Activated naive CD4-positive, alpha-beta T cell treated with anti-CD3 and anti-CD28 coated beads for 36 hours (primary cell): ENCODE measurements at regions of chr5 and their contacts with region 1.

Region 1: DNA sequence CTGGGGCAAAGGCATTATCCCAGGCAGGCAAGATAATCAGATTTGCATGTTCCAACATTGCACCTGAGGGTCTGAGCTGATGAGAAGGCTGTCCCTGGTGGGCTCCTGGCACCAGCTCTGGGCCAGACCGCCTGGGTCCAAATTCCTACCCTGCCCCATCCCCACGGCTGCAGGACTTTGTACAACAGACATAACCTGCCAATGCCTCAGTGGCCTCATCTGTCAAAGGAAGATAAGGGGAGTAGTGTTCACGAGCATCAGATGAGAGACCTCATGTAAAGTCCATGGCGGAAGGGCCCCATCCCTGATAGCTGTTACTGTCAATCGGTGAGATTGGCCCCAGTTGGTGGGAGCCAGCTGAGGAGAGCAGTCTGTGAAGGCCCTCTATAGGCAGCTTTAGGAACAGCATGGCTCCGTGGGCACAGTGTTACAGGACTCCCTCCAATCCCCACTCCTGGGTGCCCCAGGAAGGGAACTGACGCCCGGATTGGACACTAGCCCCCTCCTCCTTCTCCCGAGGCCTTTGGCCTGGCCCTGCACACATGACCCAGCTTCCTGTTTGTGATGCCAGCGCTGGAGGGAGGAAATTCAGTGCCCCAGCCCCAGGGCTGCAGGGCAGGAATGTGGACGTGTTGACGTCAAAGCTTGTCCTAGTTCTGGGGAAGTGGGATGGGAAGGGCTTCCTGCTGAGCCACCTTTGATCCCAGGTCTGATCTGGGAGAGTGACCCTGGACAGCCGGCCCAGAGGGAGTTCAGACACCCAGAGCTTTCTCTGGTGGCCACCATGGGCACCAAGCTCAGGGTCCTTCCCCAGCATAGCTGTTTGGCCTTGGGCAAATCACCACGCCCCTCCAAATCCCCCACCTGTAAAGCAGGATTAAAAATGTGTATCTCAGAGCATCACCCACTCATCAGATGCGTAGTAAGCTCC is 56.2 kb downstream of the DUSP1 start:
- DNase-seq: peak; percentile 75
- H3K4me3 Mint-ChIP-seq: no peak overlapping the region
- H3K27ac Mint-ChIP-seq: no peak overlapping the region
- H3K4me1 Mint-ChIP-seq: no peaks in the 10 kb centered on the region
- H3K27me3 Mint-ChIP-seq: peaks cover 5% of the 10 kb centered on the region

Region 2: DNA sequence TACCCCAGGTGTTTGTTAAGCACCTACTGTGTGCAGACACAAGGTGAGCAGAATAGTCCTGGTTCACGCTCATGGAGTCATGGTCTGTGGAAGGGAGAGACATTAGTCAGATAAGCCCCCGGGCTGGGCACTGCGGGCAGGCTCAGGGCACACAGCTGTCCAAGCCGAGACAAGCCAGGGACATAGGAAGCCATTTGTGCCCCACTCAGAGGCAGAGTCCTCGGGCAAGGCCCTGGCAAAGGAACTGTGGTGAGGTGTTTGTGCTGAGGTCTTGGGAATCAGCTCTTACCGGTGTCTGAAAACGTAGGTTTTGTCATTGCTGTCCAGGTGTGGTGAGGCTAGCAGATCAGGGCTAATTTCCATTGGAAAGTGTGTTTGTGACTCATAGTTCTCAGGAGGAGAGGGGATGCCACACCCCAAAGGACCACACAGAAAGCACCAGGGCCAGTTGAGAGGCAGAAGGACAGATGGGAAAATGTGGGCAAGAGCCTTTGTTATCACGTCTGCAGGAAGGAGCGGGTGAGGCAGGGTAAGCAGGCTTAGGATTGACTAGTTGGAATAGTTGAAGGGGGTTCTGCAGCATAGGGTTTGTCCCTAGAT is 119.8 kb before region 1 on chr5:
- CTCF ChIA-PET with region 1: no interaction called
- intact Hi-C with region 1: no loop called
- DNase-seq: no peak
- H3K4me3 Mint-ChIP-seq: no peak overlapping the region
- H3K27ac Mint-ChIP-seq: no peak overlapping the region
- H3K4me1 Mint-ChIP-seq: no peaks in the 10 kb centered on the region
- H3K27me3 Mint-ChIP-seq: no peaks in the 10 kb centered on the region

Region 3: DNA sequence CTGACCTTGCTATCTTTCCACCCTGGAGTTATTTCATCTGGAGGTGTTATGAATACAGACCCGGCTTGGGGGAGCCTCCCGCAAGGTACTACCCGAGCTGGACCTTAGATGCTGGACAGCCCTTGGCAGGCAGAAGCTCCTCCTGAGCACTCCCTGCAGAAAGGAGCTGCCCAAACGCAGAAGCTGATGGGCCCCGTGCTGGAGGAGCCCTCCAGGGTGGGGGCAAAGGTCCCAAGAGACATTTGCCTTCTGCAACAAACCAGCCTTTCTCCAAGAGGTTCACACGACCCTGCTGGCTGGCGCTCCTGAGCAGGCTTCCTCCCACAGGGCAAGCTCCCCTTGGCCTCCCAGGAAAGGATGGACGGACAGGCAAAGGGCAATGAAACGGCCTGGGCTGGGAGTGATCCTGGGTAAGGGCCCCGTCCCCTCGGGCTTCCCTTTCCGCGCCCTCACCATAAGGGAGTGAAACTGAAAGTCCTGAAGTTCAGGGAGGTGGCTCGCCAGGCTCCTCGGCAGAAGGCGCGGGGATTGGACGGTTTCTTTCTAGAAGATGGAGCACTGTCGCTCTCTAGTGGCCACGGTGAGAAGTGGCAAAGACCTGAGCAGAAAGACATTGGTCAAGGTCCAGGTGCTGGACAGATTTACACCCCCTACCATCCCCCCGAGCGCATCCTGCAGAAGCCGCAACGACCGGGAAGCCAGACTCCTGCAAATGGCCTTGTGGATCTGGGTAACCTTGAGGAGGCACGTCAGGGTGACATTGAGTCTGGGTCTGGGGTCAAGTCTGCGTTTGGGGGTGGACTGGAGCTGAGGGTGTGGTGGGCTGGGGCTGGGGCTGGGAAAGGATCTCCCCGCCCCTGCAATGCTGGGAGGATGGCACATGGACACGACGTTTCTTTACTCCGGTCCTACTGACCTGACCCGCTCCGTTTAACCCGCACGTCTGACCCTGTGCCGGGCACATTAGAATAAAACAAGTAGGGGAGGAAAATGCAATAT is 17.3 kb before region 1 on chr5:
- CTCF ChIA-PET with region 1: interaction called, 11 read pairs
- intact Hi-C with region 1: no loop called
- DNase-seq: peak; percentile 91
- H3K4me3 Mint-ChIP-seq: peak overlapping the region; percentile 70
- H3K27ac Mint-ChIP-seq: peak overlapping the region; percentile 50
- H3K4me1 Mint-ChIP-seq: peaks cover 11% of the 10 kb centered on the region
- H3K27me3 Mint-ChIP-seq: peaks cover 10% of the 10 kb centered on the region

Region 4: GRCh38 chr5:172770675-172771438 is 56.1 kb after region 1 on chr5 and contains the start of gene DUSP1:
- CTCF ChIA-PET with region 1: interaction called, 14 read pairs
- intact Hi-C with region 1: loop called (anchors 1 kb)
- DNase-seq: peak; percentile 96
- H3K4me3 Mint-ChIP-seq: peak within 1 kb of the TSS; percentile 90
- H3K27ac Mint-ChIP-seq: peak within 1 kb of the TSS; percentile 93
- H3K4me1 Mint-ChIP-seq: peaks cover 66% of the 10 kb centered on the region
- H3K27me3 Mint-ChIP-seq: no peaks in the 10 kb centered on the region
- total RNA-seq, gene DUSP1: 7.0 to 7.3 TPM

Region 5: DNA sequence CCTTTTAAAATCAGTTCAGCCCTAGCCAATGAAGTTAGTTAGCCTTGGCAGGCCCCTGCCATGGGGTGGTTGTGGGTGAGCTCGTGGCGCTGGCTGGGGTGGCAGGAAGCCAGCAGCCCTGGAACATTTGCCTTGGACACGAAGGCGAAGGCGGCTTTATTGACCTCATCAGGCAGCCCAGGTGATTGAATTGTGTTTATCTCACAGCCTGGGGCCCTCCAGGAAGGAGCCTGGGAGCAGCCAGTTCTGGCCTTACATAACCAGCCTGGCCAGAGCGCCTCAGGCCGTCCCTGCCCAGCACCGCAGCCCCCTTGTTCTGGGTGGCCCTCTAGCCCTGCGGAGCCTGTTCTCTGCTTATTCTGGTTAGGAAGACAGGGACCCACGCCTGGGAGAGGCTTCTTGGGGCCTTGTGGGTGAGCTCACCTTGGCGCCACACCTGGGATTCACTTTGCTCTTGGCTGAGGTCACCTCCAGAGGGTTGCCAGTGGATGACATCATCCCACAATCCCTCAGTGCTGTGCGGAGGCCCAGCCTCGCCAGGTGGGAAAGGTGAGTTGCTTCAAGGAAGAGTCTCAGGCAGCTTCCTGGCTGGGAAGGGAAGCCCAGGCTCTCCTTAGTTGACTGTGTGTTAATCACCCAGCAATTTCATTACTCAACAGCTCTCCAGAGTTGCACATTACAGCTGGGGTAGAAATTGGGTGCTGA is 190.0 kb after region 1 on chr5:
- CTCF ChIA-PET with region 1: interaction called, 12 read pairs
- intact Hi-C with region 1: no loop called
- DNase-seq: no peak
- H3K4me3 Mint-ChIP-seq: no peak overlapping the region
- H3K27ac Mint-ChIP-seq: no peak overlapping the region
- H3K4me1 Mint-ChIP-seq: no peaks in the 10 kb centered on the region
- H3K27me3 Mint-ChIP-seq: no peaks in the 10 kb centered on the region

Region 6: GRCh38 chr5:172932313-172933017 is 217.7 kb after region 1 on chr5:
- CTCF ChIA-PET with region 1: interaction called, 274 read pairs
- intact Hi-C with region 1: loop called (anchors 1 kb)
- DNase-seq: peak; percentile 79
- H3K4me3 Mint-ChIP-seq: no peak overlapping the region
- H3K27ac Mint-ChIP-seq: no peak overlapping the region
- H3K4me1 Mint-ChIP-seq: no peaks in the 10 kb centered on the region
- H3K27me3 Mint-ChIP-seq: no peaks in the 10 kb centered on the region

Region 7: GRCh38 chr5:173283318-173284288 is 568.8 kb after region 1 on chr5:
- CTCF ChIA-PET with region 1: no interaction called
- intact Hi-C with region 1: loop called (anchors 5 kb)
- DNase-seq: peak; percentile 83
- H3K4me3 Mint-ChIP-seq: peak overlapping the region; percentile 35
- H3K27ac Mint-ChIP-seq: no peak overlapping the region
- H3K4me1 Mint-ChIP-seq: peaks cover 6% of the 10 kb centered on the region
- H3K27me3 Mint-ChIP-seq: peaks cover 57% of the 10 kb centered on the region